A673 (cell line): ENCODE measurements at regions of chr18 and their contacts with region 1.

Region 1: DNA sequence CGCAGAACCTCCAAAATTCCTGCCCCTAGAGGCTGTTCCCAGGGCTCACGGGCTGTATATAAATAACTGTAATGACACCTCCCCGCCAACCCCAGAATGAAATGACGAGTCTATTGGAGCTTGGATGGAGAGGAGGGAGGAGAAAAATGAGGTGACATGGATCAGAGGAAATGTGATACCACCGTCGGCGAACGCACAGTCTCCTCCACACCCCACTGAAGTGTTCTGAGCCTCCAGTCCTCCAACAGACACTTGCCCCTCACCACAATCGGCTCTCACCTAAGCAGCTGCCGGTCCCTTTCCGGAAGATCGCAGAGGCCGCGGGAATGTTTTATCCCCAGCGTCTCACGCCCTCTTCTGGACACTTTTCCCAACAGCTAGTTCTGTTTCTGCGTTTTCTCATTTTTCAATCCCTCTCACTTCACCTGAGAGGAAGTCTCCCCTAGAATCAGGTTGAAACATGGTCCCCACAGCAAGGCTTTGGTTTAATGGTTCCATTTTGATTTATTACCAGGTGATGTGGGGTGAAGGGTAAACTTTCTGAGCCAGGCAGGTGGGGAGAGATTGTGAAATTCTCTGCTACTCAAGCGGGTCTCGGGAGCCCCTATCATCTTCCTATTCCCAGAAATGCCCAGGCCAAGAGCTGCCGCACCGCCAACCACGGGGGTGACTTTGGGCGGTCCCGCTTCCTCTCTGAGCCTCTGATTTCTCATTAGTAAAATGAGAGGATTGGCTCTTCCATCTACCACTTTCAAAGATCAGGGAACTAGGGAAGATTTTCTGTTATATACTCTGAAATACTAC is 9.1 kb upstream of the MYO5B start:
- DNase-seq: peak; percentile 65
- H3K4me3 ChIP-seq: no peak overlapping the region
- H3K27ac ChIP-seq: no peak overlapping the region
- H3K4me1 ChIP-seq: no peaks in the 10 kb centered on the region
- H3K27me3 ChIP-seq: peaks cover 63% of the 10 kb centered on the region
- CTCF ChIP-seq: peak; percentile 78

Region 2: GRCh38 chr18:49510393-49511115 is 693.4 kb before region 1 on chr18:
- CTCF ChIA-PET with region 1: interaction called, 5 read pairs
- POLR2A ChIA-PET with region 1: no interaction called
- intact Hi-C with region 1: loop called (anchors 5 kb)
- DNase-seq: peak; percentile 74
- H3K4me3 ChIP-seq: no peak overlapping the region
- H3K27ac ChIP-seq: no peak overlapping the region
- H3K4me1 ChIP-seq: peaks cover 2% of the 10 kb centered on the region
- H3K27me3 ChIP-seq: no peaks in the 10 kb centered on the region
- CTCF ChIP-seq: peak; percentile 92

Region 3: DNA sequence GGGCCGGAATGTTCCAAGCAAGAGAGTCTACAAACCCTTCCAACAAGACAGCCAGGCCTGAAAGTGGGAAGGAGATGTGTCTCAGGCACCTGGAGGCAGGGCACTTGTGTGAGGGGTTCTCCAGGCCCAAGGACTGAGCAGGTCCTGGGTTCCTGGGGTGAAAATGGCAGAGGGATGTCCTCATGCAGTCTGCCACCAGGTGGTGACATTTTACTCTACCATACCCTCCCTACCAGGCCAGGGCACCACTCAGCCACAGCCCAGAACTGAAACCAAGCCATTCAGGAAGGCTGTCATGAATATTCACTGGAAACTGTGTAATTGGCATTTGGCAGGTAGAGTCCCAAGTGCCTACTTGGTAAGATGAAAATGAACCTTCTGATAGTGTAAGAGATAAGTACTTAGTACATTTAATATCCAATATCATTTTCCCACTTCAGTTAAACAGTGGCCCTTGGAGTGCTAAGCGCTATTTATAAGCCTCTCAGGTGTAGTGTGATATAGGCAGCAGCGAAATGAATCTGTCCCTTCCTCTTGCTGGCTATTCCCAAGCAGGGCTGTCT is 194.1 kb before region 1 on chr18:
- CTCF ChIA-PET with region 1: no interaction called
- POLR2A ChIA-PET with region 1: no interaction called
- intact Hi-C with region 1: loop called (anchors 5 kb)
- DNase-seq: peak; percentile 59
- H3K4me3 ChIP-seq: no peak overlapping the region
- H3K27ac ChIP-seq: no peak overlapping the region
- H3K4me1 ChIP-seq: no peaks in the 10 kb centered on the region
- H3K27me3 ChIP-seq: peaks cover 25% of the 10 kb centered on the region
- CTCF ChIP-seq: peak; percentile 68

Region 4: DNA sequence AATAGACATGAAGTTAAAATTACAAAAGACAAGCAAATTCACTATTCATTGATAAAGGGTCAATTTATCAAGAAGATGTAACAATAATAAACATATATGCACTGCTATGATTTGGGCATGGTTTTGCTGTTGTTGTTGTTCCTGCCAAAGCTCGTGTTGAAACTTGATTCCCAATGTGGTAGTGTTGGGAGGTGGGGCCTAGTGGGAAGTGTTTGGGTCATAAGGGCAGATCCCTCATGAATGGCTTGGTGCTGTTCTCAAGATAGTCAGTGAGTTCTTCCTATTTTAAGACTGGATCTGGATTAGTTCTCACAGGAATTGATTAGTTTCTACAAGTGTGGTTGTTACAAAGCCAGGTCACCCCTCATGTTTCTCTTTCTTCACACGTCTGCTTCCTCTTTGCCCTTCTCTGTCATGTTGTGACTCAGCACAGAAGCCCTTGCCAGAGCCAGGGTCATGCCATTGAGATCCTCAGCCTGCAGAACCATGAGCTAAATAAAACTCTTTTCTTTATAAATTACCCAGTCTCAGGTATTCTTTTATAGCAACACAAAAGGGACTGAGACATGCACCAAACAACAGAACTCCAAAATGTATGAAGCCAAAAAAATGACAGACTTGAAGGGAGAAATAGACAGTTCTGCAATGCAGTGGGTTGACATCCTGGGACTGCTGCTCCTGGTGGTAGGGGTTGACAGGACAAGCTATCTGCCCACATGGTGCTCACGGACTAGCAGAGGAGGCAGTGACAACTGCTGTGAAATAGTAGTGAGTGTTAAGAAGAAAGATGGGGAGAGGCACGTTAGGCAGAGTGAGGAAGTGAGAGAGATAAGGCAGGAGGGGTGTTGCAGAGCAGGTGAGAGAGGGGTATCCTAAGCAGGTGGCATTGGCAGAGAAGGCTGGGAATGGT is 152.3 kb after region 1 on chr18:
- CTCF ChIA-PET with region 1: interaction called, 5 read pairs
- POLR2A ChIA-PET with region 1: no interaction called
- intact Hi-C with region 1: loop called (anchors 5 kb)
- DNase-seq: no peak
- H3K4me3 ChIP-seq: no peak overlapping the region
- H3K27ac ChIP-seq: no peak overlapping the region
- H3K4me1 ChIP-seq: no peaks in the 10 kb centered on the region
- H3K27me3 ChIP-seq: peaks cover 40% of the 10 kb centered on the region
- CTCF ChIP-seq: no peak

Region 5: DNA sequence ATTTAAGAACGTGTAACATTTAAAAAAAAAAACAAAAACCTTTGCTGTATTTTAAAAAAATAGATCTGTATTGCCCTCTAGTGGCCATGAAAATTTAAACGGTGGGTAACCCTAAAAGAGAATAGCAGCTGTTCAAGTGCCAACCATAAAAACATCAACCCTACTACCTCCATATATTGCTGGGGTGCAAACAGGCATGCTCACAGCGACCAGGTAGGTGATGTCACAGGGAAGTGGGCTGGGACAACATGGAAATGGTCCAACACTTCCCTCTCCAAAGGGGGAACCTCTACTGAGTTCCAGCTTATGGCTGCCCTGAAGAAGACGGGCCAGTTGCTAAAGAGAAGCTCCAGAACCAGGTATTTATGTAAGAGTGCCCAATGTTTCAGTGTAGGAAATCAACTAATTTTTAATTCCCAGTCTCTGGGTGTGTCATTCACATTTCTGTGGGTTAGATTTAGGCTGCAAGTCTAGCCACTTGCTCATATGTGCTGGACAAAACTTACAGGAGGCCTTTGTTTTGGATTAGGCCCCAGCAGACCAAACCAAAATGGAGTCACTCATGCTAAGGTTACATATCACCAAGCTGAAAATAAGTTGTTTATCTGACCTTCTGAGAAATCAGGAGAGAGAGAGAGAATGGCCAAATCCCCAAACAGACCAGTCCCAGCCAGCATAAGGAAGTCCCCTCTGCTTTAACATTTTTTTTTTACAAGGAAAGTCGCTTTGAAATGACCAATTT is 225.4 kb after region 1 on chr18:
- CTCF ChIA-PET with region 1: interaction called, 3 read pairs
- POLR2A ChIA-PET with region 1: no interaction called
- intact Hi-C with region 1: loop called (anchors 5 kb)
- DNase-seq: peak; percentile 50
- H3K4me3 ChIP-seq: no peak overlapping the region
- H3K27ac ChIP-seq: no peak overlapping the region
- H3K4me1 ChIP-seq: no peaks in the 10 kb centered on the region
- H3K27me3 ChIP-seq: no peaks in the 10 kb centered on the region
- CTCF ChIP-seq: peak; percentile 63